Activated B cell treated with CpG ODN at 0.5 μM for 24 hours (primary cell): ENCODE measurements at regions of chr1 and their contacts with region 1.

Region 1: GRCh38 chr1:169601093-169601881 is 15.0 kb upstream of the F5 start:
- DNase-seq: no peak
- ATAC-seq: peak; percentile 53
- H3K4me3 Mint-ChIP-seq: peak overlapping the region; percentile 42
- H3K27ac Mint-ChIP-seq: peak overlapping the region; percentile 71
- H3K4me1 Mint-ChIP-seq: peaks cover 44% of the 10 kb centered on the region
- H3K27me3 Mint-ChIP-seq: no peaks in the 10 kb centered on the region
- CTCF ChIP-seq: no peak

Region 2: GRCh38 chr1:169546087-169546995 is 54.9 kb before region 1 on chr1:
- CTCF ChIA-PET with region 1: interaction called, 28 read pairs
- POLR2A ChIA-PET with region 1: no interaction called
- intact Hi-C with region 1: loop called (anchors 1 kb)
- DNase-seq: no peak
- ATAC-seq: peak; percentile 78
- H3K4me3 Mint-ChIP-seq: no peak overlapping the region
- H3K27ac Mint-ChIP-seq: no peak overlapping the region
- H3K4me1 Mint-ChIP-seq: no peaks in the 10 kb centered on the region
- H3K27me3 Mint-ChIP-seq: peaks cover 3% of the 10 kb centered on the region
- CTCF ChIP-seq: peak; percentile 73

Region 3: DNA sequence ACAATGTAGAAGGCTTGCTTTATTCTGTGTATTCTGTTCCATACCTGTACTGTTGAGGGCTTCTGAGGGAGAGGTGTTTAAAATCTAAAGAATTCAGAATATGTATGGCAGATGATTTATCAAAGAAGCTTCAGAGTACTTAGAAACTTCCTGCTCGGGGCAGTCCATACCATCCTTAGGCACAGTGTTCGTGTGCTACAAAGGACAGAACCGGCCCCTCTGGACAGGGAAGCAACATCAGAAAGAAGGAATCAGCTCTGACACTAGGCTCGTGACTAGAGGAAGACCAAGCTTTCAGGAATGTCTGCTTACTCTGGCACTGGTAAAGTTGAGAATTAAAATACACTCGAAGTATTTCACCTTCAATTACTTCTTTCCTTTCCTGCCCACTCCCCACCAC is 14.5 kb after region 1 on chr1:
- CTCF ChIA-PET with region 1: interaction called, 19 read pairs
- POLR2A ChIA-PET with region 1: no interaction called
- intact Hi-C with region 1: no loop called
- DNase-seq: no peak
- ATAC-seq: no peak
- H3K4me3 Mint-ChIP-seq: no peak overlapping the region
- H3K27ac Mint-ChIP-seq: no peak overlapping the region
- H3K4me1 Mint-ChIP-seq: peaks cover 2% of the 10 kb centered on the region
- H3K27me3 Mint-ChIP-seq: no peaks in the 10 kb centered on the region
- CTCF ChIP-seq: no peak

Region 4: GRCh38 chr1:169694304-169695075 is 93.2 kb after region 1 on chr1:
- CTCF ChIA-PET with region 1: interaction called, 192 read pairs
- POLR2A ChIA-PET with region 1: interaction called, 59 read pairs
- intact Hi-C with region 1: loop called (anchors 1 kb)
- DNase-seq: no peak
- ATAC-seq: peak; percentile 9
- H3K4me3 Mint-ChIP-seq: peak overlapping the region; percentile 62
- H3K27ac Mint-ChIP-seq: peak overlapping the region; percentile 90
- H3K4me1 Mint-ChIP-seq: peaks cover 97% of the 10 kb centered on the region
- H3K27me3 Mint-ChIP-seq: no peaks in the 10 kb centered on the region
- CTCF ChIP-seq: no peak

Region 5: GRCh38 chr1:169809370-169810095 is 208.2 kb after region 1 on chr1:
- CTCF ChIA-PET with region 1: interaction called, 45 read pairs
- POLR2A ChIA-PET with region 1: no interaction called
- intact Hi-C with region 1: loop called (anchors 1 kb)
- DNase-seq: no peak
- ATAC-seq: peak; percentile 37
- H3K4me3 Mint-ChIP-seq: no peak overlapping the region
- H3K27ac Mint-ChIP-seq: no peak overlapping the region
- H3K4me1 Mint-ChIP-seq: no peaks in the 10 kb centered on the region
- H3K27me3 Mint-ChIP-seq: no peaks in the 10 kb centered on the region
- CTCF ChIP-seq: peak; percentile 62